Activated CD4-positive, alpha-beta T cell treated with anti-CD3 and anti-CD28 coated beads for 36 hours (primary cell): ENCODE measurements at regions of chr18 and their contacts with region 1.

Region 1: GRCh38 chr18:49021433-49022129 is 70.8 kb upstream of the SMAD7 start:
- DNase-seq: peak; percentile 84
- ATAC-seq: peak; percentile 88
- H3K4me3 Mint-ChIP-seq: no peak overlapping the region
- H3K27ac Mint-ChIP-seq: no peak overlapping the region
- H3K4me1 Mint-ChIP-seq: no peaks in the 10 kb centered on the region
- H3K27me3 Mint-ChIP-seq: no peaks in the 10 kb centered on the region

Region 2: DNA sequence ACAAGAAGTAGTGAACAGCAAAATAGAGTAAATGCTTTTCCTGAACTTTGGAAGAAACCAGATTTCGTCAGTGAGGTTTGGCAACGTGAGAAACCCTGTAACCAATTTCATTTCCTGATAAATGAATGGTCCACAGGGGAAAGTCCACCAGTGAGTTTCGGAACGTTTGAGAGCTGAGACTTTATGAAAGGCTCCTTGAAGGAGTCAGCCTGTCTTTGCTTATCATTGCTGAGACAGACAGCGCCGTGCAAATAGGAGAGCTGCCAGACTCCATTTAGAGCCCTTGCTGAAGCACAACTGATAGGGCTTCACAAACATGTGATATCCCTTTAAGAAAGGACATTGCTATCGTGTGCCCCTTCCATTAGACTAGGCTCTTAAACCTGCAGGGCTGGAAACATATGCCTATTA is 50.9 kb after region 1 on chr18:
- CTCF ChIA-PET with region 1: no interaction called
- POLR2A ChIA-PET with region 1: no interaction called
- intact Hi-C with region 1: no loop called
- DNase-seq: no peak
- ATAC-seq: peak; percentile 19
- H3K4me3 Mint-ChIP-seq: no peak overlapping the region
- H3K27ac Mint-ChIP-seq: no peak overlapping the region
- H3K4me1 Mint-ChIP-seq: peaks cover 9% of the 10 kb centered on the region
- H3K27me3 Mint-ChIP-seq: no peaks in the 10 kb centered on the region

Region 3: GRCh38 chr18:49178736-49179135 is 157.2 kb after region 1 on chr18:
- CTCF ChIA-PET with region 1: interaction called, 4 read pairs
- POLR2A ChIA-PET with region 1: no interaction called
- intact Hi-C with region 1: loop called in 1 of 2 experiments (anchors 1 kb)
- DNase-seq: peak; percentile 17
- ATAC-seq: no peak
- H3K4me3 Mint-ChIP-seq: no peak overlapping the region
- H3K27ac Mint-ChIP-seq: no peak overlapping the region
- H3K4me1 Mint-ChIP-seq: peaks cover 21% of the 10 kb centered on the region
- H3K27me3 Mint-ChIP-seq: no peaks in the 10 kb centered on the region

Region 4: GRCh38 chr18:49238433-49239042 is 217.0 kb after region 1 on chr18:
- CTCF ChIA-PET with region 1: interaction called, 8 read pairs
- POLR2A ChIA-PET with region 1: no interaction called
- intact Hi-C with region 1: loop called (anchors 5 to 10 kb)
- DNase-seq: peak; percentile 17
- ATAC-seq: no peak
- H3K4me3 Mint-ChIP-seq: no peak overlapping the region
- H3K27ac Mint-ChIP-seq: no peak overlapping the region
- H3K4me1 Mint-ChIP-seq: no peaks in the 10 kb centered on the region
- H3K27me3 Mint-ChIP-seq: no peaks in the 10 kb centered on the region

Region 5: DNA sequence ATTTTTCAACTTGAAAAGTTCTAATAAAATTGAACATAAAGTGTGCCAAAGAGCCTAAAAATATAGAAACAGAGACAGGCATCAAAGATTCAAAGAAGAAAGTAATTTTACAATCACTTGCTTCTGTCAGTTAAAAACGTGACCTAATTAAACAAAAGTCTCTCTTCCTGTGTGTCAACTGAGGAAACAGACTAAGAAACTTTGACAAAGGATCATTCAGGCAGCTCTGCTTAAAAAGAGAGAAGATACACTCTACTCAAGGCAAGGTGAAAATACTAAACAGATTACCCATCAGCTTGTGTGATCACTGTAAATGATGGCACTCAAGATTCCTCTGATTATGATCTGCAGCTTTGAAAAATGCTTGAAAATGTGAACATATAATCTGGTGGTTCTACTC is 391.1 kb after region 1 on chr18:
- CTCF ChIA-PET with region 1: no interaction called
- POLR2A ChIA-PET with region 1: no interaction called
- intact Hi-C with region 1: loop called in 1 of 2 experiments (anchors 2 kb)
- DNase-seq: no peak
- ATAC-seq: no peak
- H3K4me3 Mint-ChIP-seq: no peak overlapping the region
- H3K27ac Mint-ChIP-seq: peak overlapping the region; percentile 65
- H3K4me1 Mint-ChIP-seq: peaks cover 39% of the 10 kb centered on the region
- H3K27me3 Mint-ChIP-seq: no peaks in the 10 kb centered on the region

Region 6: DNA sequence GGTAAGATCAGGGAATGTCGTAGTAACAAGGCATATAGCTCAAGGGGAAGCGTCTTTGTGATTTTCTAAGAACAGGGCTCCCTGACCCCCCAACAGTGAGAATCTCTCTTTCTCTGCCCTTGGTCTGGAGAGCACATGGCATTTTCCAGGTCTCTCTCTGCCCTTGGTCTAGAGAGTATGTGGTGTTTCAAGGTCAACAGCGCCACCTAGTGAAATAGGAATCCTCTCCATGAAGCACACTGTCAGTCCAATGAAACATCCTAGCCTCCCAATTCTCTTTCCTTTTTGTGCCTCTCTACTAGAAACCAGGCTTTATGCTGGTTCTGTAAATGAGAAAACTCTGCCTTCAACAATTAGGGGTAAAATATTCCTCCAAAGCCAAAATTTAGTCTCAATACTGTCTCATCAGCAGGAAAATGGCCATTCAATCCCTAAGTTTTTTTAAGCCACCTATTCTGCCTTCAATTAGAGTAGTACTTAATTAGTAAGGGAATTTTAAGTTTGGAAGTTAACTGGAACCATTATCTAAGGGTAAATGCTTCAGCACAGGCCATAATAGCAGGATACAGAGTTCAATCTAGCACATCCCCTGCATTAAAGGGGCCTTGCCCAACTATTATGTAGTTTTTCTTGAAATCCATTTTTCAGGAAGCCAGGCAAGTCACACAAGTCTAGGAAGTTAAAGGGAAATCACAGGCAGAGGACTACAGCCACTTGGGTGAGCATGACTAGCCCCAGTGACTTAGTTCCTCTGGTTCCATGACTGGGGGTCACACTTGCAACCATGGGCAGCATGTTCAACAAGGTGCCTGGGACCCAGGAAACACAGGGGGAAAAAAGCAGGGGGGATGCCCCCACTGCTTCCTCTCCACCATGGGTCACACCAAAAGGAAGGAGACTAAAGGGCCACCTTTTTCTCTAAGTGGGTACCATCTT is 426.5 kb after region 1 on chr18:
- CTCF ChIA-PET with region 1: no interaction called
- POLR2A ChIA-PET with region 1: no interaction called
- intact Hi-C with region 1: loop called in 1 of 2 experiments (anchors 5 kb)
- DNase-seq: peak; percentile 55
- ATAC-seq: peak; percentile 58
- H3K4me3 Mint-ChIP-seq: no peak overlapping the region
- H3K27ac Mint-ChIP-seq: no peak overlapping the region
- H3K4me1 Mint-ChIP-seq: peaks cover 8% of the 10 kb centered on the region
- H3K27me3 Mint-ChIP-seq: no peaks in the 10 kb centered on the region